Lower leg skin (tissue), 4 donors: ENCODE measurements at regions of chr4 and their contacts with region 1.

Region 1: DNA sequence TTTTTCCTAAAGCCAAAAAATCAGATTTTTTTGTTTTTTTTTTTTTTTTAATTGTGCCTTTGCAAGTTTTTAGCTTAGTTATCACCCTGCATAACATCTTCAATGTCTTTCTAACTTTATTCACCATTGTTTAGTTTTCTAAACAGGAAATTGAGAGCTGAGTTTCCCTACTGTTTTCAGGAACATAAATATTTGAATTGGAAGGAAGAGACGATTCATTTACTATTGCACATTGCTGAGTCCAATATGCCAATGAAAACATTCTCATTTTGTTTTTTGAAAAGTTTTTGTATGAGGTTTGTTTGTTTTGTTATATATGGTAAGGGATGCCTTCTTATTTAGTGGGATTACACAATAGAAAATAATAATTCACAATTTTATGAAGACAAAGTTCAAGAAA is 148.4 kb downstream of the ANKRD50 start:
- DNase-seq: no peak
- H3K4me3 ChIP-seq: no peak overlapping the region
- CTCF ChIP-seq: no peak
- POLR2A ChIP-seq: no peak

Region 2: GRCh38 chr4:125801373-125801772 is 1237.3 kb after region 1 on chr4:
- intact Hi-C with region 1: loop called (anchors 10 kb)
- DNase-seq: no peak
- H3K4me3 ChIP-seq: no peak overlapping the region
- CTCF ChIP-seq: no peak
- POLR2A ChIP-seq: no peak